Activated CD4-positive, alpha-beta memory T cell treated with anti-CD3 and anti-CD28 coated beads, Interleukin-2, amount 10 ng/mL, durations not matched to agents 7 days and 5 days (primary cell): ENCODE measurements at regions of chrX and their contacts with region 1.

Region 1: DNA sequence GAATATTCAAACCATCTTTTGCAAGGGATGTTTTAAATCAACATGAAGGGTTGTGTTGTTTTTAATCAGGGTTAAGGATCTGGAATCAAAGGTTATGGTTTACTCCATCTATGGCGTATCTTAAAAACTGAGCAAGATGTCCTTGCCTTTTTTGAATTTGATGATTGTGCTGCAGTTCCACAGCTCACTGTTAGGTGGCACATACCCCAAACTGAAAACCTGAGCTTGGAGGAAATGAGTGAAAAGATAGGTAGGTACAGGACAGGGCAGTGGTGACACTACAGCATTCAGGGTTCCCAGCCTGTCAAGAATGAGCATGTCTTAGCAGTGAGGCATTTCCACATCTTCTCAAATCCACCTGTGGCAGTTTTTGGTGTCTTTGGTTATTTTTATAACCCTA is 13.1 kb upstream of the EOLA1 start:
- DNase-seq: peak; percentile 46
- H3K4me3 Mint-ChIP-seq: no peak overlapping the region
- H3K27ac Mint-ChIP-seq: peak overlapping the region; percentile 64
- H3K4me1 Mint-ChIP-seq: peaks cover 35% of the 10 kb centered on the region
- H3K27me3 Mint-ChIP-seq: no peaks in the 10 kb centered on the region

Region 2: GRCh38 chrX:149374751-149375150 is 153.0 kb before region 1 on chrX:
- CTCF ChIA-PET with region 1: no interaction called
- POLR2A ChIA-PET with region 1: no interaction called
- DNase-seq: no peak
- H3K4me3 Mint-ChIP-seq: no peak overlapping the region
- H3K27ac Mint-ChIP-seq: no peak overlapping the region
- H3K4me1 Mint-ChIP-seq: no peaks in the 10 kb centered on the region
- H3K27me3 Mint-ChIP-seq: no peaks in the 10 kb centered on the region

Region 3: DNA sequence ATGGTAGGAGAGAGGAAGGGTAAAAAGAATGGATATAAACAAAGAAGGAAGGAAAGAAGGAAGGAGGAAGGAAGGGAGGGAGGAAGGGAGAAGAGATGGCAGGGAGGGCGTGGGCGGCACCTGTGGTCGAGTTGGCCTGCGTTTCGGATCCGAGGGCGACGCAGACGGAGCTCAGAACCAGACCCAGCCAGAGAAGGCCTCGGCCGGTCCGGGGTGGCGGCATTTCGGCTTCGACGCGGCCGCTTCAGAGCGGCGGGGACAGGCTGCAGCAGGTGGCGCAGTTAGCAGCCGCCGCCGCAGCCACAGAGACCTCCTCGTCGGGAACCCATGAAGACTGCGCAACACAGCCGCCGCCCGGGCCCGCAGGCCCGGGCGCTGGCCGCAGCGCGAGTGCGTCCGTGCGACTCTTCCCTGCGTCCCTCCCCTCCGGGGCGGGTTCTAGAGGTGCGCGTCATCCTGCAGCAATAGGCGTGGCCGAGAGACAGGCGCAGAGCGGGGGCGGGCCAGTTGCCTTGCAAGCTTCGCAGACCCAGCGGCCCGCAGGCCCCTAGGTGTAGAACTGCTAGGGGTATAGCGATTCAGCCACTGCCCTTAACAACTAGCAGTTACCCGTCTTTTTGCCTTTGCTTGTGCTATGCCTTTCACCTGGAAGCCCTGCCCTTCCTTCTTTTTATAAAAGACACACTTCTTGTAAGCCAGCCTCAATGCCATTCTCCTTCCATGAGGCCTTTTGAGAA is 22.6 kb before region 1 on chrX and contains the start of gene IDS:
- CTCF ChIA-PET with region 1: interaction called, 6 read pairs
- POLR2A ChIA-PET with region 1: interaction called, 13 read pairs
- DNase-seq: peak; percentile 90
- H3K4me3 Mint-ChIP-seq: peak within 1 kb of the TSS; percentile 98
- H3K27ac Mint-ChIP-seq: peak within 1 kb of the TSS; percentile 99
- H3K4me1 Mint-ChIP-seq: peaks cover 40% of the 10 kb centered on the region
- H3K27me3 Mint-ChIP-seq: no peaks in the 10 kb centered on the region
- total RNA-seq, gene IDS: 114 to 116 TPM

Region 4: GRCh38 chrX:149512225-149512885 is 15.3 kb before region 1 on chrX:
- CTCF ChIA-PET with region 1: interaction called, 15 read pairs
- POLR2A ChIA-PET with region 1: interaction called, 3 read pairs
- DNase-seq: peak; percentile 61
- H3K4me3 Mint-ChIP-seq: no peak overlapping the region
- H3K27ac Mint-ChIP-seq: no peak overlapping the region
- H3K4me1 Mint-ChIP-seq: peaks cover 46% of the 10 kb centered on the region
- H3K27me3 Mint-ChIP-seq: peaks cover 2% of the 10 kb centered on the region